ENCODE measurements at regions of chr1 and their contacts with region 1.

Region 1: DNA sequence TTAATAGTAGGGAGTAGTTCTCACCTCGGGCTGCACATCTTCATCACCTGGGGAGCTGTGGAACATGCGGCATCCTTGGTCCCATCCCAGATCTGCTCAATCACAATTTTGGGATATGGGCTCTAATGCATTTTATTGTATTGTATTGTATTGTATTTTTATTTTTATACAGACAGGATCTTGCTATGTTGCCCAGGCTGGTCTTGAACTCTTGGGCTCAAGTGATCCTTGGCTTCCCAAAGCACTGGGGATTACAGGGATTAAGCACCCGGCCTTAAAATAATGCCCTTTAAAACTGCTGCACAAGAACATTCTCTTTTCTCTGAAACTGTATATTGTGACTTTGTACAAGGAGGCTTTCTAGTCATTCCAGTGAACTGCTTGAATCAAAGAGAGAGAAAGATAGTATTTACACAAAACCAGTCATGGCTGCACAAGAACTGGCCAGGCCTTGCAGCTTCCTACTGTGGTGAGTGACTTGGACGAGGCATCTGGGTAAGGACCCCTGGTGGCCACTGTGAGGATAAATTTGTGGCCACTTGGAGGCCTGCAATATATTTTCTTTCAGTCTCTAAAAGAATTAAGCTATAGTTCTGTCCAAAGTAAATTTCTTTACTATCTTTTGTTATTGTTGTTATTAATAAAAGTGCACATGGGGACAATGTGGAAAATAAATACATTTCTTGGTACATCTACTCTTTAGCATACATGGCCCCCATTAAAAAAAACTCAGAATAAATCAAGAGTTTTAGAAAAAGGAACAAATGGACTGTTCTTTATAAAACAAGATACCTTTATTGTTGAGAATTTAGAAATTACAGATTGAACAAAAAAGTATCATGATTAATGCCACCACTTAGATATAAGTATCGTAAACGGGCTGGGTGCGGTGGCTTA is 48.0 kb downstream of the TBCE start:
- DNase-seq: no peak
- ATAC-seq: peak; percentile 80
- H3K4me3 ChIP-seq: no peak overlapping the region
- H3K27ac ChIP-seq: peak overlapping the region; percentile 83
- H3K4me1 ChIP-seq: peaks cover 49% of the 10 kb centered on the region
- H3K27me3 ChIP-seq: no peaks in the 10 kb centered on the region
- CTCF ChIP-seq: peak; percentile 89

Region 2: GRCh38 chr1:235253219-235253962 is 161.9 kb before region 1 on chr1:
- CTCF ChIA-PET with region 1: no interaction called
- POLR2A ChIA-PET with region 1: no interaction called
- in situ Hi-C with region 1: no loop called
- intact Hi-C with region 1: loop called (anchors 1 kb)
- DNase-seq: peak; percentile 69
- ATAC-seq: peak; percentile 99
- H3K4me3 ChIP-seq: no peak overlapping the region
- H3K27ac ChIP-seq: no peak overlapping the region
- H3K4me1 ChIP-seq: peaks cover 3% of the 10 kb centered on the region; the same call in 1 of the 2 replicates
- H3K27me3 ChIP-seq: no peaks in the 10 kb centered on the region
- CTCF ChIP-seq: peak; percentile 96

Region 3: DNA sequence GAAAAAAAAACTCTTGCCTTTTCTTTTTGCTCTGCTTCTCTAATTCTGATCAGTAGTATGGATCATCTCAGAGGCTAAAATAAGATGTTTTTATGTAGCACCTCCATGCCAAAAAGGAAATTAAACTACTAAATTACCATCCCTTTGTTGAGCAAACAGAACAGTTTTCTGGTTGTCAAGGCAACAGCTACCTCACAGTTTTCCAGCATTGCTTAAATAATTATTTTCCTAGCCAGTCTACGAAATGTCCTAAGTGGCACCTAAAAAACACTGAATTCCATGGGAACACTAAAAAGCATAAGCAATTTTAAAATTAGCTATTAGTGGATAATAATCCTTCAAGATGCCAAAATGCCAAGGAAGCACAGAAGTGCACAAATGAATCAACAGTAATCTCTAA is 148.9 kb before region 1 on chr1:
- CTCF ChIA-PET with region 1: no interaction called
- POLR2A ChIA-PET with region 1: no interaction called
- in situ Hi-C with region 1: no loop called
- intact Hi-C with region 1: loop called (anchors 5 kb)
- DNase-seq: no peak
- ATAC-seq: no peak
- H3K4me3 ChIP-seq: no peak overlapping the region
- H3K27ac ChIP-seq: no peak overlapping the region
- H3K4me1 ChIP-seq: peaks cover 4% of the 10 kb centered on the region; the same call in 1 of the 2 replicates
- H3K27me3 ChIP-seq: no peaks in the 10 kb centered on the region
- CTCF ChIP-seq: no peak

Region 4: GRCh38 chr1:235328357-235329138 is 86.7 kb before region 1 on chr1 and contains the start of gene GGPS1:
- CTCF ChIA-PET with region 1: interaction called, 4 read pairs
- POLR2A ChIA-PET with region 1: no interaction called
- in situ Hi-C with region 1: no loop called
- intact Hi-C with region 1: loop called (anchors 2 kb)
- DNase-seq: peak; percentile 99
- ATAC-seq: peak; percentile 92
- H3K4me3 ChIP-seq: peak within 1 kb of the TSS; percentile 95 to 99
- H3K27ac ChIP-seq: peak within 1 kb of the TSS; percentile 98
- H3K4me1 ChIP-seq: peaks cover 26% of the 10 kb centered on the region
- H3K27me3 ChIP-seq: no peaks in the 10 kb centered on the region
- CTCF ChIP-seq: no peak
- total RNA-seq, gene GGPS1: 60.6 TPM

Region 5: DNA sequence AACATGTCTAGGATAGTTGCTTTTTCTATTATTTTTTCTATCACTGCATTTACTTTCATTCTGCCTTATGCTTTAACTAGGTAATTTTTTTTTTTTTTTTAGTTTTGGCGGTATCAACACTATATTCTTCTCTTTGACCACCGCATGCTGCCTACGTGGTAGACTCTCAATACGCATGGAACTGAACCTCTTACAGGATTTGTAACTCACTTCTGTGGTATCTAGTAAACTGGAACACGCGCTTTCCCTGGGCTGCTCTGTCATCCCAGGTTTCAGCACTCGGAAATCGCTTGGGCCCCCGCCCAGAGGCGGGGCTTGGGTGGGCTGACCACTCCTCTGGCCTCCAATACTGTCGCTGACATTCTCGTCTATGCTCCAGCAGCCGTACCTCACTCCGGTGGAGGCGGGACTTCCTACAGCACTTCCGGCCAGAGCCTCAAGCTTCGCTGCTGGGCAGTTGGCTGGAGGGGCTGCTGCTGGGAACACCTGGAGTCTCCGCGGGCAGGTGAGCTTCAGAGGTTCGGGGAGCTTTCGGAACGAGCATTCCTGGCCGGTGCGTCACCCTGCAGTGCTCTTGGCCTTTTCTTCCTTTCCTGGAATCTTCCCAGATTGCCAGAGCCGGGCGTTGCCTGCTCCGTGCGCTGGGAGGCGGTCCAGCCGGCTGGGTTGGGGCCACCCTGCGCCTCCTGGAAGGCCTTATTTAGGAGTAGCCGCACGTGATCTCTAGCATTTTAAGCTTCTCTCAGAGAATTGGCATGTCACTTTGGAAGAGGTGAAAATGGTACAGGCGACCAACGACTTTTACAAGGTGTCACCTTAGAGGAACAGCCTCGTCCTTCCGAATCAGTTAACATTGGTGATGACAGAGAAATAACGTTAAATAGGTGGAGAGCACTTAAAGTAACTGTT is 48.0 kb before region 1 on chr1 and contains the start of gene TBCE:
- CTCF ChIA-PET with region 1: interaction called, 3 read pairs
- POLR2A ChIA-PET with region 1: no interaction called
- in situ Hi-C with region 1: no loop called
- intact Hi-C with region 1: loop called (anchors 5 kb)
- DNase-seq: peak; percentile 97
- ATAC-seq: peak; percentile 100
- H3K4me3 ChIP-seq: peak within 1 kb of the TSS; percentile 81 to 93
- H3K27ac ChIP-seq: peak within 1 kb of the TSS; percentile 94
- H3K4me1 ChIP-seq: peaks cover 5% of the 10 kb centered on the region
- H3K27me3 ChIP-seq: no peaks in the 10 kb centered on the region
- CTCF ChIP-seq: no peak
- total RNA-seq, gene TBCE: 72.0 TPM

Measured in Panc1 (cell line).